A673 (cell line): ENCODE measurements at regions of chr5 and their contacts with region 1.

Region 1: GRCh38 chr5:16160706-16161105 is 18.9 kb downstream of the MARCHF11 start:
- DNase-seq: peak; percentile 74
- H3K4me3 ChIP-seq: no peak overlapping the region
- H3K27ac ChIP-seq: no peak overlapping the region
- H3K4me1 ChIP-seq: no peaks in the 10 kb centered on the region
- H3K27me3 ChIP-seq: peaks cover 4% of the 10 kb centered on the region
- CTCF ChIP-seq: peak; percentile 79

Region 2: DNA sequence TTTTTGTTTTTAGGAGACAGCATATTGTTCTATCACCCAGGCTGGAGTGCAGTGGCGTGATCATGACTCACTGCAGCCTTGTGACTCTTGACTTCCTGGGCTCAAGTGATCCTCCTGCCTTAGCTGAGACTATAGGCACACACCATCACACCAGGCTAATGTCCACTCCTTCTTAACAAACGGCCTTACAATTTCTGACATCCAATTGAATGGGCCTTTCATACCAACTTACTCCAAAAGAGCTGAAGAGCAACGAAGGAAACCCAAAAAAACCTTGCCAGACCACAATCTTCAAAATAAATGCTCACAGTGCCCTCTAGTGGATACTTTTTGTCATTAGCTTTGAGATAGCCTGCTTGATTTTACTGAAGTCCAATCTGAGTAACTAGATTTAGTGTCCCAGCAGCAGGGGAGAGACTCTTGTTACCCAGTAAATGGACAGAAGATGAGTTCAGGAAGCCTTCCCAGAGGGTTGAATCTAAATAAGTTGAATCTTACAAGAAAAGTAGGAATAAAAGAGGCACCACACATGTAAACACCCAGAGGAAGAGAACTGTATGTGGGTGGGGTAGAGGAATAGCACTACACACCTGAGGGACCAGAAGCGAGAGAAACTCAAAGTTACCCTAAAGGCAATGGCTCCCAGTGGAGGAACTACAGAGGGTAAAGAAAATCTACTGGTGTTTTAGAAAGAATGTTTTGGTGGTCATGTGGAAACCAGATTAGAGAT is 295.6 kb after region 1 on chr5:
- CTCF ChIA-PET with region 1: interaction called, 36 read pairs
- POLR2A ChIA-PET with region 1: no interaction called
- intact Hi-C with region 1: loop called (anchors 1 kb)
- DNase-seq: peak; percentile 84
- H3K4me3 ChIP-seq: no peak overlapping the region
- H3K27ac ChIP-seq: no peak overlapping the region
- H3K4me1 ChIP-seq: no peaks in the 10 kb centered on the region
- H3K27me3 ChIP-seq: no peaks in the 10 kb centered on the region
- CTCF ChIP-seq: peak; percentile 78

Region 3: DNA sequence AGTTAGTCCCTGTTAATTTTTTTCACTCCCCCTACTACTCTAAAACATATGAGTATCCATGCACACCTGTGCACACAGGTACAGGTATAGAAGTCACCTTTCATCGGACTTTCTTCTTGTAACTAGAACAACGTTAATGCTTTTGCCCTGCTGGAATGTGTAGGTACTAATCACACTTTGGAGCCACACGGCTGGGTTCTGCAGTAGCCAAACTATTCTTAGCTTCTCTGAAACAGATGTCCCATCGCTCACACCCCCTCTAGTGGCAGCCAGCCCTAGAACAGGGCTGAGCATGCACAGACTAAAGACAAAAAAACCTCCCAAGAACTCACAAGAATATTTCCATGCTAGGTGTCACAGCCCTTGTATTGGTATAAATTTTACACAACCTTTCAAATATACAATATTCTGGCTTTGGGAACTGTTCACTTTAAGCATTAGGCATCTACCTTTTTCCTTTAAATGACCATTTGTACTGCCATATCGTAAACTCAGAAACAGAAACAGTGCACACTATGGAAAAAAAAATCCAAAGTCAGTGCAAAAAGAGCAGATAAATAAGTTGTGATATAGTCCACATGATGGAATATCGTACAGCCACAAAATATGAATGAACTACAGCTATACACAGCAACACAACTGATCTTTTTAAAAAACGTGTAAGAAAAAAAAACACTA is 392.1 kb after region 1 on chr5:
- CTCF ChIA-PET with region 1: interaction called, 3 read pairs
- POLR2A ChIA-PET with region 1: no interaction called
- intact Hi-C with region 1: loop called (anchors 5 kb)
- DNase-seq: peak; percentile 79
- H3K4me3 ChIP-seq: no peak overlapping the region
- H3K27ac ChIP-seq: no peak overlapping the region
- H3K4me1 ChIP-seq: peaks cover 11% of the 10 kb centered on the region
- H3K27me3 ChIP-seq: no peaks in the 10 kb centered on the region
- CTCF ChIP-seq: peak; percentile 94